ENCODE measurements at regions of chr2 and their contacts with region 1.

Region 1: GRCh38 chr2:32168513-32168912 is 2.8 kb downstream of the SLC30A6 start:
- DNase-seq: no peak
- ATAC-seq: no peak
- H3K4me3 ChIP-seq: no peak overlapping the region
- H3K27ac ChIP-seq: no peak overlapping the region
- H3K4me1 ChIP-seq: peaks cover 20 to 26% of the 10 kb centered on the region in 2 donors
- H3K27me3 ChIP-seq: no peaks in the 10 kb centered on the region
- CTCF ChIP-seq: no peak
- POLR2A ChIP-seq: no peak

Region 2: GRCh38 chr2:32010670-32011484 is 157.6 kb before region 1 on chr2 and contains the start of gene MEMO1:
- in situ Hi-C with region 1: loop called in 1 of 4 experiments (anchors 10 kb)
- intact Hi-C with region 1: loop called (anchors 2 kb)
- DNase-seq: peak; percentile 91 to 94
- ATAC-seq: peak; percentile 83 to 85
- H3K4me3 ChIP-seq: peak within 1 kb of the TSS; percentile 89 to 95 (median 90)
- H3K27ac ChIP-seq: peak within 1 kb of the TSS; percentile 86 to 98 (median 94)
- H3K4me1 ChIP-seq: peaks cover 19 to 36% of the 10 kb centered on the region in 2 donors
- H3K27me3 ChIP-seq: no peaks in the 10 kb centered on the region
- CTCF ChIP-seq: peak in 3 of 5 experiments; percentile 9 to 20 (median 19)
- POLR2A ChIP-seq: peak; percentile 55 to 77
- total RNA-seq, gene MEMO1: 32.2 to 75.0 (median 50.0) TPM

Region 3: DNA sequence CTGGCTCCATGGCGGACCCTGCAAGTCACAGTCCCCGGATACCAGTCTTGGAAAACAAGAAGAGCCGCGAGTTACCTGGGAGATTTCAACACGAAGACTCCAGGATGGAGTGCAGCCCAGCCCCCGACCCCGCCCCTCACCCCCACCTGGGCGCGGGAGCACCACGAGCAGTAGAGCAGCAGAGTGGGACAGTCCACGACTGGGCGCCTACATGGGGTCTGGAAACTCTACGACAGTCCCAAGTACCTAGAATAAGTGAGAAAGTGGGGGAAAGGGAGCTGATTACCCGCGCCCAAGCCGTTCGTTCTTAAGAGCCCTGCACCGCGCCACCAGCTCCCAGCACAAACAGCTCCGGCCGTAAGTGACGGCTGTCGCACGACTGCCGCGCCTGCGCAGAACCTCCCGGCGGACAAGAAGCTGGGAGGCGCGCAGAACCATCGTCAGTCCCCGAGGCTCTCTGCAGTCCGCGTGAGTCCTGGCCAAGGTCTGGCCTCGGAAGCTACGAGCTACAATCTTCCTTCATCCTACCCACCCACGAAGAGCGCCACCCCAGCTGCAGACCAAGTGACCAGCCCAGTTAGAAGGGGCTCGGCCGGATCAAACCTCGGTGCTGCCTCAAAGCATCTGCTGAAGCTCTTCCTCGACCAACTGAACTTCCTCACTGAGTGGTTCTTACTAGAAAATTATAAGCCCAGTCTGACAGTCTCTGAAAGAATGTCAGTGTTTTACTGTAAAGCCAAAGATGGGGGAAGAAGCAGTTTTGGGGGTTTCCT is 128.9 kb before region 1 on chr2 and contains the start of gene DPY30:
- in situ Hi-C with region 1: no loop called
- intact Hi-C with region 1: loop called (anchors 1 kb)
- DNase-seq: peak; percentile 84 to 89
- ATAC-seq: peak; percentile 97 to 98
- H3K4me3 ChIP-seq: peak within 1 kb of the TSS; percentile 76 to 99 (median 95)
- H3K27ac ChIP-seq: peak within 1 kb of the TSS; percentile 83 to 92 (median 89)
- H3K4me1 ChIP-seq: peaks cover 9% of the 10 kb centered on the region in 2 donors
- H3K27me3 ChIP-seq: no peaks in the 10 kb centered on the region
- CTCF ChIP-seq: no peak
- POLR2A ChIP-seq: peak; percentile 72 to 75
- total RNA-seq, gene DPY30: 29.3 to 59.8 (median 36.2) TPM

Region 4: GRCh38 chr2:32063310-32064161 is 105.0 kb before region 1 on chr2 and contains the start of gene SPAST:
- in situ Hi-C with region 1: loop called in 2 of 4 experiments (anchors 10 kb)
- intact Hi-C with region 1: loop called (anchors 1 kb)
- DNase-seq: peak; percentile 96 to 97
- ATAC-seq: peak; percentile 96
- H3K4me3 ChIP-seq: peak within 1 kb of the TSS; percentile 68 to 97 (median 82)
- H3K27ac ChIP-seq: peak within 1 kb of the TSS; percentile 86 to 97 (median 88)
- H3K4me1 ChIP-seq: peaks cover 18% of the 10 kb centered on the region in 2 donors
- H3K27me3 ChIP-seq: no peaks in the 10 kb centered on the region
- CTCF ChIP-seq: peak; percentile 77 to 79 (median 77)
- POLR2A ChIP-seq: peak; percentile 71 to 88
- total RNA-seq, gene SPAST: 25.0 to 30.6 (median 28.9) TPM

Region 5: GRCh38 chr2:32222966-32223365 is 54.5 kb after region 1 on chr2:
- in situ Hi-C with region 1: no loop called
- intact Hi-C with region 1: no loop called
- DNase-seq: no peak
- ATAC-seq: no peak
- H3K4me3 ChIP-seq: no peak overlapping the region
- H3K27ac ChIP-seq: no peak overlapping the region
- H3K4me1 ChIP-seq: no peaks in the 10 kb centered on the region
- H3K27me3 ChIP-seq: no peaks in the 10 kb centered on the region
- CTCF ChIP-seq: no peak
- POLR2A ChIP-seq: no peak

Region 6: GRCh38 chr2:32277674-32278482 is 109.4 kb after region 1 on chr2 and contains the start of gene YIPF4:
- in situ Hi-C with region 1: no loop called
- intact Hi-C with region 1: loop called (anchors 2 kb)
- DNase-seq: peak; percentile 78 to 89
- ATAC-seq: peak; percentile 100
- H3K4me3 ChIP-seq: peak within 1 kb of the TSS; percentile 87 to 97 (median 92)
- H3K27ac ChIP-seq: peak within 1 kb of the TSS; percentile 85 to 90 (median 88)
- H3K4me1 ChIP-seq: peaks cover 12% of the 10 kb centered on the region in 2 donors
- H3K27me3 ChIP-seq: no peaks in the 10 kb centered on the region
- CTCF ChIP-seq: no peak
- POLR2A ChIP-seq: peak; percentile 55 to 68
- total RNA-seq, gene YIPF4: 19.5 to 27.3 (median 23.5) TPM

Region 7: DNA sequence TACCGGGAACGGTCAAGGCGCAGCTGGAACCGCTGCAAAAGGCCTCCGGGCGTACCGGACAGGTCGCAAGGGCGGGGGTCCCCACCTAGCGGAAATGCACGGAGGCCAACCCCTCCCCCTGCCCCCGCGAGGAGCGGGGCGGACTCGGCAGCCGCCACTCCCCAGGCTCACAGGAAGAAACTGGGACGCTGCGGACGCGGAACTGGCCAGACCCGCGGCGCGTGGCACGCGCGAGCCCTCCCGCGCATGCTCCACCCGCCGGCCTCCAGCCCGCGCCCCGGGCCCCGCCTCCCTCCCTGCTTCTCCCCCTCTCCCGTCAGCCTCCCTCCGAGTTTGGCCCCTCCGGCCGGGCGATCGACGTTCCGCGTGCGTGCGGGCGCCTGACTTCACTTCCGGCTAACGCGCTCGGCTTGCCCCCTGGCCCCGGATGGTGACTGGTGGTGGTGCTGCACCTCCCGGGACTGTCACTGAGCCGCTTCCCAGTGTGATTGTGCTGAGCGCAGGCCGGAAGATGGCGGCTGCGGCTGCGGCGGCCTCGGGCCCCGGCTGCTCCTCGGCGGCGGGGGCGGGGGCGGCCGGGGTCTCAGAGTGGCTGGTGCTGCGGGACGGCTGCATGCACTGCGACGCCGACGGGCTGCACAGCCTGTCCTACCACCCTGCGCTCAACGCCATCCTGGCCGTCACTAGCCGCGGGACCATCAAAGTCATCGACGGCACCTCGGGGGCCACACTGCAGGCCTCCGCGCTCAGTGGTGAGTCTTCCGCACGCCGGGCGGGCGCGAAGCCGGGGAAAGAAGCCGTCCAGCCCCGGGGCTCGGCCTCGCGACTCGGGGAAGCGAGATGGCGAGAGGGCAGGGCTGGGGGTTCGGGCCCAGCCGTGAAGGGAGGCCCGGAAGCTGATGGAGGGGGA is 188.5 kb after region 1 on chr2 and contains the start of gene BIRC6:
- in situ Hi-C with region 1: no loop called
- intact Hi-C with region 1: loop called (anchors 5 kb)
- DNase-seq: peak; percentile 99
- ATAC-seq: peak; percentile 89 to 91
- H3K4me3 ChIP-seq: peak within 1 kb of the TSS; percentile 89 to 100 (median 95)
- H3K27ac ChIP-seq: peak within 1 kb of the TSS; percentile 95 to 100 (median 99)
- H3K4me1 ChIP-seq: peaks cover 36 to 42% of the 10 kb centered on the region in 2 donors
- H3K27me3 ChIP-seq: no peaks in the 10 kb centered on the region
- CTCF ChIP-seq: peak in 1 of 5 experiments; percentile 31
- POLR2A ChIP-seq: peak; percentile 91 to 93
- total RNA-seq, gene BIRC6: 60.1 to 107 (median 77.6) TPM

Measured in gastrocnemius medialis (tissue), 4 donors.